ENCODE measurements at regions of chr15 and their contacts with region 1.

Region 1: DNA sequence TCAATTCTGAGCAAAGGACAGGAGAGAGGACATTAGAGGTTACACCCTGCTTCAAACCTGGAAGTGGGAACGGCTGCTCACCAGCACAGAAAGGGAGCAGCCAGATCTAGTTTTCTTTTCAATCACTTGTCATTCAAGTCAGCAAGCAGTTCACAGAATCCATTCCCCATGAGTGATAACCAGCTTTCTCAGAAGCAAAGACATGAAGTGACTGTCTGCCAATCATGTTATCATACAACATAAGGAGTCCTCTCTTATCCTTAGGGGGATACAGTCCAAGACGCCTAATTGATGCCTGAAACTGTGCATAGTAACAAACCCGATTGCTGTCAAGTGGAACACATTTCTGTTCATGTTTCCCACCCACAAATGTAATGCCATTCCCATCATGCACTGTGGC is 54.7 kb downstream of the FAM98B start:
- DNase-seq: peak in 2 of 4 experiments; percentile 22 to 62
- ATAC-seq: peak; percentile 50
- H3K4me3 ChIP-seq: no peak overlapping the region
- H3K27ac ChIP-seq: no peak overlapping the region
- H3K4me1 ChIP-seq: peaks cover 0 to 7% of the 10 kb centered on the region in 2 experiments; a peak in 2 of 5 replicates
- H3K27me3 ChIP-seq: no peaks in the 10 kb centered on the region
- CTCF ChIP-seq: no peak
- EP300 ChIP-seq: no peak
- POLR2A ChIP-seq: no peak
- RAD21 ChIP-seq: 0 out of 4 replicates have a peak, but pooled peaks of 1 of the 2 experiments have one; percentile 2

Region 2: DNA sequence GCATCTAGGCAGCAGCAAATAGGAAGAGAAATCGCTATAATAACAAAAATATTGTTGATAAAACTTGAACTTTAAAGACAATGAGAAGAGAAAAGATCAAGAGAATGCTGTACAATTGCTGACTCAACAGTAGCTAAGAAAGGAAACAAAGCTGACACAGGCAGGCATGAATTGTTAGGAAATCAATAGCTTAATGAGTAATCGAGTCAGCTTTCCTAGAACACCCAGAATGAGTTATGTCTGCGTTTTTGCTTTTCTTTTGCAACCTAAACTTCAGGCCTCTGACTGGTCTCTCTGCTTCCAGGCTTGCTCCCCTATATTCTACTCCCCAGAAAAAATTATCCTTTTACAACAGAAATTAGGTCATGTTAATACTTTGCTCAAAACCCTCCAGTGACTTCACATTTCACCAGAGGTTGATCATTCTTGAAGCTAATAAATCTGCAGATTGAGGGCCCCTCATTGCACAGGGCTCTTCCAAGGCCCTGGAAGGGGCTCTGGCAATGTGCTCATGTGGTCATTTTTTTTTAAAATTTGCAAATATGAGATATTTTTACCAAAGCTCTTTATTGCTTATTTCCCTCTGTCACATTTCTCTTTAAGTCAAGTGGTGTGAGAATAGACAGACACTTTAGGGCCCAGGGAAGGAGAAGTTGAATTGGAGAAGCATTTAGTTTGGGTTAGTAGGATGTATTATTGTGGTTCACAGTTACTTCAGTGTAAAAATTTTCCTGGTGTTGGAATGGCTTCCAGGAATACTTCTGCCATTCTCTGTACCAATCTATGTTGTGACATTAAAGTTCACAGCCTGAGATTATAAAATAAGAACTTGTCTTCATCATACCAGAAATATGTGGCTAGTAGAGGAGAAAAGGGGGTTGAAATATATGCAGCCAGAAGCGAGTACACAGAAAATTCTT is 457.9 kb before region 1 on chr15:
- CTCF ChIA-PET with region 1: no interaction called
- POLR2A ChIA-PET with region 1: no interaction called
- in situ Hi-C with region 1: no loop called
- intact Hi-C with region 1: no loop called
- DNase-seq: no peak
- ATAC-seq: no peak
- H3K4me3 ChIP-seq: no peak overlapping the region
- H3K27ac ChIP-seq: no peak overlapping the region
- H3K4me1 ChIP-seq: no peaks in the 10 kb centered on the region
- H3K27me3 ChIP-seq: no peaks in the 10 kb centered on the region
- CTCF ChIP-seq: no peak
- EP300 ChIP-seq: no peak
- POLR2A ChIP-seq: no peak
- RAD21 ChIP-seq: no peak

Region 3: DNA sequence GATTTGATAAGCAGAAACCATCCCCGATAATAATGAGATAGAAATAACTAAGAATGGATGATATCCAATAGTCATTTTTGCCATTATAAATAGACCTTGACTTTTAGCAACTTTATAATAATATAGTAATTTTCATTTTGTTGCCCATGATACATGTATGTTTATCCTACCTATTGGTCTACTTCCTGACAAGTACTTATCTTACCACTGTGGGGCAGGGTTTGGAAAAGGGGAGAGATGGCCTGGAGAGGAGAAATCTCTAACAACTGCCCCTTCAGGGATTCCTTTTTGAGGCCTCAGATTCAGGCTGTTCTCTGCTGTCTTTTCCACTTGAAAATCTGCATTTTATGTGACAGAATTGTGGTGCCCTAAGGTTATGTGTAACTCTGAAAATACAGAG is 12.5 kb before region 1 on chr15:
- CTCF ChIA-PET with region 1: no interaction called
- POLR2A ChIA-PET with region 1: interaction called, 25 read pairs
- in situ Hi-C with region 1: no loop called
- intact Hi-C with region 1: no loop called
- DNase-seq: no peak
- ATAC-seq: no peak
- H3K4me3 ChIP-seq: no peak overlapping the region
- H3K27ac ChIP-seq: no peak overlapping the region
- H3K4me1 ChIP-seq: peaks cover 0 to 10% of the 10 kb centered on the region in 2 experiments; a peak in 3 of 5 replicates
- H3K27me3 ChIP-seq: no peaks in the 10 kb centered on the region
- CTCF ChIP-seq: no peak
- EP300 ChIP-seq: no peak
- POLR2A ChIP-seq: no peak
- RAD21 ChIP-seq: no peak